Activated CD8-positive, alpha-beta T cell treated with anti-CD3 and anti-CD28 coated beads for 36 hours (primary cell): ENCODE measurements at regions of chr17 and their contacts with region 1.

Region 1: GRCh38 chr17:7383742-7384488 is 3.0 kb downstream of the TNK1 start:
- DNase-seq: peak; percentile 82
- ATAC-seq: peak; percentile 96
- H3K4me3 Mint-ChIP-seq: peak overlapping the region; percentile 76
- H3K27ac Mint-ChIP-seq: peak overlapping the region; percentile 85
- H3K4me1 Mint-ChIP-seq: peaks cover 7% of the 10 kb centered on the region
- H3K27me3 Mint-ChIP-seq: peaks cover 32% of the 10 kb centered on the region
- CTCF ChIP-seq: no peak

Region 2: DNA sequence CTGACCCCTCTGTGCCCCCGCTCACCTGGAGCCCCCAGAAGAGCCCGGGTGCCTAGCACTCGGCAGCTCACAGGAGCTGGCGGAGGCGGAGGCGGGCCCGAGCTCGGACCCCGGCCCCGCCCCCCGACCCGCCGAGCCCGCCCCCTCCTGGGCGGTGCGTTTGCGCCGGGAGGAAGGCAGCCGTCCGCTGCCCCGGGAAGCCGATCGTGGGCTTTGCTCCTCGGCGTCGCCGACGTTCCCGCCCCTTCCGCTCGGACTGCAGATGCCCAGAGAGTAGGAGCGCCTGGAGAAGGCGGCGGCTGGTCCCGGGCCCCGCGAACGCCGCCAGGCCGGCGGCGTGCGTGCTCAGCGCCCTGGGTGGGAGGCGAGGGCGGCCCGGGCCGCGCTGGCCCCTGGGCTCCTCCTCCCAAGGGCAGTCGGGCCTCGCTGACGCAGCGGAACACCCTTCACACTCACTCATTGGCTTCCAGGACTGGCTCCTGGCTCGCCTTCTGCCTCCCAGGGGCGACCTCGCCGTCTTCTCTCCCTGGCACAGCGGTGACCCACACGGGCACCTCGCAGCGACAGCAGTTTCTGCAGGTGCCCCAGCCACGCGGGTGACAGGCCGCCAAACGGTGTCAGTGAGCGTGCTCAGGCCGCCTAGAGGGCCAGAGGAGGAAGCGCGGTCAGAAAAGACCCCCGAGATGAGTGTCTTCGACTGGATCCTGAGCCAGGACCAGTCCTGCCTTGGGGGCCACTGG is 10.7 kb after region 1 on chr17 and contains the start of gene PLSCR3:
- CTCF ChIA-PET with region 1: interaction called, 7 read pairs
- POLR2A ChIA-PET with region 1: interaction called, 11 read pairs
- intact Hi-C with region 1: no loop called
- DNase-seq: peak; percentile 83
- ATAC-seq: peak; percentile 89
- H3K4me3 Mint-ChIP-seq: peak within 1 kb of the TSS; percentile 97
- H3K27ac Mint-ChIP-seq: peak within 1 kb of the TSS; percentile 96
- H3K4me1 Mint-ChIP-seq: peaks cover 27% of the 10 kb centered on the region
- H3K27me3 Mint-ChIP-seq: no peaks in the 10 kb centered on the region
- CTCF ChIP-seq: no peak
- total RNA-seq, gene PLSCR3: 62.6 to 71.1 TPM